SK-N-SH (cell line): ENCODE measurements at regions of chr7 and their contacts with region 1.

Region 1: GRCh38 chr7:40483630-40484029 is 348.8 kb downstream of the SUGCT start:
- DNase-seq: no peak
- H3K4me3 ChIP-seq: no peak overlapping the region
- H3K27ac ChIP-seq: peak overlapping the region; percentile 31 to 56
- H3K4me1 ChIP-seq: peaks cover 8 to 9% of the 10 kb centered on the region in 2 experiments; a peak in 3 of 4 replicates
- H3K27me3 ChIP-seq: no peaks in the 10 kb centered on the region
- CTCF ChIP-seq: peak; percentile 63
- EP300 ChIP-seq: peak in 1 of 2 experiments; percentile 78; a peak in 1 of 4 replicates
- RAD21 ChIP-seq: peak; percentile 56

Region 2: GRCh38 chr7:40499718-40500117 is 16.1 kb after region 1 on chr7:
- CTCF ChIA-PET with region 1: interaction called, 15 read pairs
- POLR2A ChIA-PET with region 1: no interaction called
- DNase-seq: no peak
- H3K4me3 ChIP-seq: no peak overlapping the region
- H3K27ac ChIP-seq: peak overlapping the region; percentile 56 to 95
- H3K4me1 ChIP-seq: peaks cover 0 to 2% of the 10 kb centered on the region in 2 experiments; a peak in 2 of 4 replicates
- H3K27me3 ChIP-seq: no peaks in the 10 kb centered on the region
- CTCF ChIP-seq: no peak
- EP300 ChIP-seq: peak in 1 of 2 experiments; percentile 90; a peak in 2 of 4 replicates
- RAD21 ChIP-seq: no peak

Region 3: GRCh38 chr7:40623863-40624262 is 140.2 kb after region 1 on chr7:
- CTCF ChIA-PET with region 1: no interaction called
- POLR2A ChIA-PET with region 1: no interaction called
- DNase-seq: no peak
- H3K4me3 ChIP-seq: no peak overlapping the region
- H3K27ac ChIP-seq: peak overlapping the region in 1 of 2 experiments; percentile 35; a peak in 2 of 4 replicates
- H3K4me1 ChIP-seq: peaks cover 0 to 35% of the 10 kb centered on the region in 2 experiments; a peak in 2 of 4 replicates
- H3K27me3 ChIP-seq: no peaks in the 10 kb centered on the region
- CTCF ChIP-seq: no peak
- EP300 ChIP-seq: peak in 1 of 2 experiments; percentile 43; a peak in 2 of 4 replicates
- RAD21 ChIP-seq: no peak; the same call in 1 of the 2 replicates